ENCODE measurements at regions of chr12 and their contacts with region 1.

Region 1: DNA sequence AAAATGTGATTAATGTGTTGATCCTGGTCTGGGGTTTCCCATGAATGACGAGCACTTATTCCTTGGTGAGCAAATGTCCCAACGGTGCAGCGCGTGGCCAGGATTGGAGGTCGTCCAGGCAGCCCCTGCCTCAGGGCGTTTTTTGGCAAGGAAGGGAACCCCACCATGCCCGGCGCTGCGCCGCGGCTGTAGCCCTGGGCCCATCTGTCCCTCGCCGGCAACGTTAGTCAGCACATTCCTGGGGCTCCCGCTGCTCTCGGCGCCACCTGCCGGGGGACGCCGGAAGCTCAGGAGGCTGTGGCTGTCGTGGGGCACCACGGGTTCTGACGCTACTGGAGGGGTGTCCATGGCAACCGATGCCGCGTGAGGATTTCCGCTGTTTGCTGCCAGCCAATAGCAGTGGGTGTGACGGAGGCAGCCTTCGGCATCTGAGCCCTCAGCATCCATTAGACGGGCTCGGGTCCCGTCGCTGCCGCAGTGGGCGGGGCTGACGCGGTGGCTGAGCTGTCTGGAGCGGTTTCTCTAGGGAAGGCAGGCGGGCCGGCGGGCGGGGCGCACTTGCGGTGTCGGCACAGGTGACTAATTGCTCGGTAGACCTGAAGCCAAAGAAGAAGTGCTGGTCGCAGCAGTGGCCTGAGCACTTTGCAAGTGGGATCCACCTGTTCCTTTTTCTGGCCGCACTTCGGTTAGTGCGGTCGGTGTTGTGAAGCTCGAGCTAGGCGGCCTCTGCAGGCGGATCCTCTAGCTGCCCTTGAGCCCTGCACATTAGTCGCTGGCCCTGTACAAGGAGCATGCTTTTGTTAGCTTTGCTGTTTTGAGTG is 29.5 kb downstream of the RAB35 start:
- DNase-seq: peak; percentile 100
- ATAC-seq: peak; percentile 98
- H3K4me3 Mint-ChIP-seq: peak overlapping the region; percentile 46
- H3K27ac Mint-ChIP-seq: peak overlapping the region; percentile 75
- H3K4me1 Mint-ChIP-seq: peaks cover 41% of the 10 kb centered on the region
- H3K27me3 Mint-ChIP-seq: no peaks in the 10 kb centered on the region

Region 2: DNA sequence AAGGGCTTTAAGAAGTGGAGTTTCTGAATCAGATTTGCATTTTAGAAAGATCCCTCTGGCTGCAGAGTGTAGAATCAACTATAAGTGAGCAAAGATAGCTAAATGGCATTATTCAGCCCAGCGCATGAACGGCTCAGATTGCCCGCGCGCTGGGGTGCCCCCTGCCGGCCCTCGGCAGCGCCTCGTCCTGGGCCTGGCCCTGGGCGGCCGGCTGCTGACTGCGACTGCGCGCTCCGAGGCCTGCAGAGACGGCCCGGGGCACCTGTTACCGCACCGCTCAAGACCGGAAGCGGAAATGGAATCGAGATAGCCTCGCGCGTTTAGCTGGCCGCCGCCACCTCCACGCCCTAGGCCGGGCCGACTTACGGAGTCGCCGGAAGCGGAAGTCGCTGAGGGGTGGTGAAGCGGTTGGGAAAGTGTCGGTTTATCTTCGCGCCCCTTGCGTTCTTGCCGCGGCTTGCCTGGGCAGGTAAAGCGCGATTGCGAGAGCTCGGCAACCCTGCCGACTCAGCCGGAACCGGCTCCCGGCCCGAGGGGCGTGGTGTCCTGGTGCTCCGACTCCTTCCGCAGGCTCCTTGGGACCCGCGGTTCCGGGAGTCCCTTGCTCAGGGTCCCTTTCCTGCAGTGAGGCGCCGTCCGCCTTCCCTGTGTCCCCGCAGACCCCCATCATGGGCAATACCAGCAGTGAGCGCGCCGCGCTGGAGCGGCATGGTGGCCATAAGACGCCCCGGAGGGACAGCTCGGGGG is 419.3 kb before region 1 on chr12 and contains the start of gene PRKAB1:
- CTCF ChIA-PET with region 1: no interaction called
- POLR2A ChIA-PET with region 1: no interaction called
- intact Hi-C with region 1: loop called in 1 of 2 experiments (anchors 1 kb)
- DNase-seq: peak; percentile 98
- ATAC-seq: peak; percentile 96
- H3K4me3 Mint-ChIP-seq: peak within 1 kb of the TSS; percentile 91
- H3K27ac Mint-ChIP-seq: peak within 1 kb of the TSS; percentile 91
- H3K4me1 Mint-ChIP-seq: peaks cover 48% of the 10 kb centered on the region
- H3K27me3 Mint-ChIP-seq: no peaks in the 10 kb centered on the region
- total RNA-seq, gene PRKAB1: 18.0 to 21.7 TPM

Region 3: GRCh38 chr12:119931402-119931801 is 155.6 kb before region 1 on chr12:
- CTCF ChIA-PET with region 1: no interaction called
- POLR2A ChIA-PET with region 1: no interaction called
- intact Hi-C with region 1: loop called (anchors 2 kb)
- DNase-seq: no peak
- ATAC-seq: no peak
- H3K4me3 Mint-ChIP-seq: no peak overlapping the region
- H3K27ac Mint-ChIP-seq: no peak overlapping the region
- H3K4me1 Mint-ChIP-seq: no peaks in the 10 kb centered on the region
- H3K27me3 Mint-ChIP-seq: no peaks in the 10 kb centered on the region

Region 4: DNA sequence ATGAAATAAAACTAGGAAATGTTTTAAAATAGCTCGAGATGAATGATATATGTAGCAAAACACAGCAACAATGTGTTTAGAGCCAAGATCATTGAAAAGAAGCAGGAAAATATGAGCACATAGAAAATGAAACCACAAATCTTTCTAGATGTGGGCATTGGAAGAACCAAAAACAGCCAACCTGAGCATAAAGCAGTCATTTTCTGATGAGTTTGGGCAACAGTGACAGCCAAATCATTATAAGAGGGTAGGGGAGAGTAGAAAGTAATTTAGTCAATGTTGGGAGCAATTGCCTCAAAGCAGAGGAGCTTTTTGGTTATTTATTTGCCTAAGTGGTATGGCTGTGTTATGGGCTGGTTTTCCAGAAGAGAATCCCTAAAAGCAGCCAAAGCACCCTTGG is 106.8 kb before region 1 on chr12:
- CTCF ChIA-PET with region 1: interaction called, 3 read pairs
- POLR2A ChIA-PET with region 1: interaction called, 3 read pairs
- intact Hi-C with region 1: loop called (anchors 1 to 2 kb)
- DNase-seq: peak; percentile 21
- ATAC-seq: peak; percentile 96
- H3K4me3 Mint-ChIP-seq: peak overlapping the region; percentile 30
- H3K27ac Mint-ChIP-seq: peak overlapping the region; percentile 69
- H3K4me1 Mint-ChIP-seq: peaks cover 23% of the 10 kb centered on the region
- H3K27me3 Mint-ChIP-seq: peaks cover 6% of the 10 kb centered on the region

Region 5: DNA sequence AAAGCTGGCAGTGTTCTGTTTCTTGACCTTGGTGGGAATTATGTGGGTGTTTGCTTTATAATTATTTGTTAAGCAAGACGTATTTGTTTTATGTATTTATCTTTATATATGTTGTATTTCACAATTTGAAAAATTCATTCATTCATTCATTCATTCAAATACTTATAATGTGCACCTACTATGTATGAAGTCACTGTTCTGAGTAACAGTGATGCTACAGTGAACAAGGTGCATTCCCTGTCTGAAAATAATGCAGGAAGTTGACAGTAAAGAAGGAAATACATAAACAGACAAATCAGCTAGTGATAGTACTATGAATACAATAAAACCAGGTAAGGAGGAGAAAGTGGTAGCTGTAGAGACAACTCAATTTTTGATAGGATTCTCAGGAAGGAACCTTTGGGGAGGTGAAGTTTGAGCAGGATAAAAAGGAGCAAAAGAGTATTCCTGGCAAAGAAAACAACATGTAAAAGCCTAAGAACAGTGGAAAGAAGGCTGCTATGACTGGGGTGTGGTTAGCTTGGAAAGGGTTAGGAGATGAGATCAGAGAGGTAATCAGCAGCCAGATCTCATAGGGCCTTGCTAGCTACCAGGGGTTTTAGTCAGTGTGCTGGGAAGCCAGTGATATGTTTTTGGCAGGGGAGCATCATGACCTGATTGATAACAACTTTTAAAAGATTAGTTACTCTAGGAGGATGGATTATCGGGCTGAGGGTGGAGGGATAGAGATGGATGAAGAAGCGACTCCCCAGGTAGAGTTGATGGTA is 80.6 kb before region 1 on chr12:
- CTCF ChIA-PET with region 1: interaction called, 7 read pairs
- POLR2A ChIA-PET with region 1: interaction called, 3 read pairs
- intact Hi-C with region 1: loop called in 1 of 2 experiments (anchors 1 kb)
- DNase-seq: peak; percentile 69
- ATAC-seq: peak; percentile 80
- H3K4me3 Mint-ChIP-seq: peak overlapping the region; percentile 63
- H3K27ac Mint-ChIP-seq: peak overlapping the region; percentile 100
- H3K4me1 Mint-ChIP-seq: peaks cover 85% of the 10 kb centered on the region
- H3K27me3 Mint-ChIP-seq: no peaks in the 10 kb centered on the region

Region 6: GRCh38 chr12:120194534-120195395 is 107.8 kb after region 1 on chr12 and contains the start of gene GCN1:
- CTCF ChIA-PET with region 1: no interaction called
- POLR2A ChIA-PET with region 1: no interaction called
- intact Hi-C with region 1: loop called in 1 of 2 experiments (anchors 1 kb)
- DNase-seq: peak; percentile 93
- ATAC-seq: peak; percentile 81
- H3K4me3 Mint-ChIP-seq: peak within 1 kb of the TSS; percentile 98
- H3K27ac Mint-ChIP-seq: peak within 1 kb of the TSS; percentile 92
- H3K4me1 Mint-ChIP-seq: peaks cover 45% of the 10 kb centered on the region
- H3K27me3 Mint-ChIP-seq: no peaks in the 10 kb centered on the region
- total RNA-seq, gene GCN1: 125 to 139 TPM